ENCODE measurements at regions of chr12 and their contacts with region 1.

Region 1: GRCh38 chr12:47828608-47829536 is 9.2 kb upstream of the HDAC7 start:
- DNase-seq: peak; percentile 55
- H3K4me3 Mint-ChIP-seq: peak overlapping the region; percentile 60
- H3K27ac Mint-ChIP-seq: peak overlapping the region; percentile 81
- H3K4me1 Mint-ChIP-seq: peaks cover 89% of the 10 kb centered on the region
- H3K27me3 Mint-ChIP-seq: no peaks in the 10 kb centered on the region

Region 2: GRCh38 chr12:47758834-47759690 is 69.8 kb before region 1 on chr12 and contains the start of gene RAPGEF3:
- CTCF ChIA-PET with region 1: interaction called, 7 read pairs
- POLR2A ChIA-PET with region 1: interaction called, 16 read pairs
- intact Hi-C with region 1: no loop called
- DNase-seq: peak; percentile 86
- H3K4me3 Mint-ChIP-seq: peak within 1 kb of the TSS; percentile 68
- H3K27ac Mint-ChIP-seq: no peak within 1 kb of the TSS
- H3K4me1 Mint-ChIP-seq: peaks cover 46% of the 10 kb centered on the region
- H3K27me3 Mint-ChIP-seq: no peaks in the 10 kb centered on the region
- total RNA-seq, gene RAPGEF3: 2.1 to 2.5 TPM

Region 3: DNA sequence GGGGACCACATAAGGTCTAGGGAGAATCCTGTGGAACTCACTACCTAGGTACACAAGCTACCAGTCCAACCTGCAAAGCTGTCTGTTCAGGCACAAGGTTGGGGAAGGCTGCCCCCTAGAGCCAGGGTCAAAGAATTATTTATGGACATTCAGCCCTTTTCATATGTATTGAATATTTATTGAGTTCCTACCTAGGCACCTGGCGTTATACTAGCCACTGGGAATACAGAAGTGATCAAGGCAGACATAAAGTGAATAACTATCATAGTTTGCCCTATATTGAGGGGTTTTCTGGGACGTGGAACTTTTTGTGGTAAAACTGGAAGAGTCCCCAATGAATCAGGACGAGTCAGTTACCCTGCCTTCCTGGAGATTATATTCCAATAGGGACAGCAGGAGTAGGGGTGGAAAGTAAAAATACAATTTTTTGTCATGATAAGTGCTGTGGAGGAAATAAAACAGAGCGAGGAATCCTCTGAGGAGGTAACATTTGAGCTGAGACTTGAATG is 61.6 kb before region 1 on chr12:
- CTCF ChIA-PET with region 1: interaction called, 13 read pairs
- POLR2A ChIA-PET with region 1: interaction called, 7 read pairs
- intact Hi-C with region 1: no loop called
- DNase-seq: peak; percentile 86
- H3K4me3 Mint-ChIP-seq: no peak overlapping the region
- H3K27ac Mint-ChIP-seq: no peak overlapping the region
- H3K4me1 Mint-ChIP-seq: no peaks in the 10 kb centered on the region
- H3K27me3 Mint-ChIP-seq: no peaks in the 10 kb centered on the region

Region 4: GRCh38 chr12:47779301-47779942 is 49.5 kb before region 1 on chr12:
- CTCF ChIA-PET with region 1: interaction called, 24 read pairs
- POLR2A ChIA-PET with region 1: interaction called, 3 read pairs
- intact Hi-C with region 1: no loop called
- DNase-seq: peak; percentile 95
- H3K4me3 Mint-ChIP-seq: no peak overlapping the region
- H3K27ac Mint-ChIP-seq: no peak overlapping the region
- H3K4me1 Mint-ChIP-seq: peaks cover 17% of the 10 kb centered on the region
- H3K27me3 Mint-ChIP-seq: no peaks in the 10 kb centered on the region

Region 5: GRCh38 chr12:47797441-47797840 is 31.4 kb before region 1 on chr12:
- CTCF ChIA-PET with region 1: interaction called, 795 read pairs
- POLR2A ChIA-PET with region 1: interaction called, 13 read pairs
- intact Hi-C with region 1: no loop called
- DNase-seq: peak; percentile 47
- H3K4me3 Mint-ChIP-seq: no peak overlapping the region
- H3K27ac Mint-ChIP-seq: no peak overlapping the region
- H3K4me1 Mint-ChIP-seq: peaks cover 17% of the 10 kb centered on the region
- H3K27me3 Mint-ChIP-seq: no peaks in the 10 kb centered on the region

Region 6: GRCh38 chr12:47870175-47870781 is 41.4 kb after region 1 on chr12:
- CTCF ChIA-PET with region 1: interaction called, 3 read pairs
- POLR2A ChIA-PET with region 1: interaction called, 14 read pairs
- intact Hi-C with region 1: no loop called
- DNase-seq: no peak
- H3K4me3 Mint-ChIP-seq: no peak overlapping the region
- H3K27ac Mint-ChIP-seq: peak overlapping the region; percentile 76
- H3K4me1 Mint-ChIP-seq: peaks cover 70% of the 10 kb centered on the region
- H3K27me3 Mint-ChIP-seq: no peaks in the 10 kb centered on the region

Region 7: GRCh38 chr12:48005001-48005749 is 176.3 kb after region 1 on chr12:
- CTCF ChIA-PET with region 1: no interaction called
- POLR2A ChIA-PET with region 1: no interaction called
- intact Hi-C with region 1: no loop called
- DNase-seq: no peak
- H3K4me3 Mint-ChIP-seq: no peak overlapping the region
- H3K27ac Mint-ChIP-seq: no peak overlapping the region
- H3K4me1 Mint-ChIP-seq: peaks cover 36% of the 10 kb centered on the region
- H3K27me3 Mint-ChIP-seq: peaks cover 84% of the 10 kb centered on the region

Measured in activated CD4-positive, alpha-beta memory T cell treated with anti-CD3 and anti-CD28 coated beads for 36 hours (primary cell).